AG04449 (cell line): ENCODE measurements at regions of chr2 and their contacts with region 1.

Region 1: DNA sequence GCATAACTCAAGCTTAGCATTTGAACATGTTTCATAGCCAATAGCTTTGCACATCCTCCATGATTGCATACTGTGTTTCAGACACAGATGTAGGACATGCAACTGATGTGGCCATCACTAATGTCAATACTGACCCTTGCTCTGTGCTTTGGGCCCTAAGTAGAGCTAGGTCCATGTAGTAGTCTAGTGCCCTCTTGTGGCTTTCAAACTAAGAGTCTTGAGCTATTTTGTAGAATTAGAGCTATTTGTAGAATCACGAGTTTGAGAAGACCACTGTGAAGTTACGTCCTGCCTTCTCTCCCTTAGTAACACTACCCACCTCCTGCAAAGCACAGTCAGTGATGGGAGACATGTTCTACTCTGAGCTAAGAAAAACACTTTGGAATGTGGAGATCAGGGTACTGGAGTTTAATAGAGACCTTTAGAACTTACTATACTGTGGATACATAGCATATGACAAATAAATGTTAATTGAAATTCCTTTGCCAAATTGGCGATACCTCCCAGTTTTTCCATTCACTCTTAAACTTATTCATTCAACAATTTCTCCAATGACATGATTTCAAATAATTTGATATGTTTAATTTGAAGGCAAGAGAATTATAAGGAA is 306.5 kb upstream of the TNP1 start:
- DNase-seq: no peak
- H3K4me3 ChIP-seq: no peak overlapping the region
- CTCF ChIP-seq: peak; percentile 40

Region 2: DNA sequence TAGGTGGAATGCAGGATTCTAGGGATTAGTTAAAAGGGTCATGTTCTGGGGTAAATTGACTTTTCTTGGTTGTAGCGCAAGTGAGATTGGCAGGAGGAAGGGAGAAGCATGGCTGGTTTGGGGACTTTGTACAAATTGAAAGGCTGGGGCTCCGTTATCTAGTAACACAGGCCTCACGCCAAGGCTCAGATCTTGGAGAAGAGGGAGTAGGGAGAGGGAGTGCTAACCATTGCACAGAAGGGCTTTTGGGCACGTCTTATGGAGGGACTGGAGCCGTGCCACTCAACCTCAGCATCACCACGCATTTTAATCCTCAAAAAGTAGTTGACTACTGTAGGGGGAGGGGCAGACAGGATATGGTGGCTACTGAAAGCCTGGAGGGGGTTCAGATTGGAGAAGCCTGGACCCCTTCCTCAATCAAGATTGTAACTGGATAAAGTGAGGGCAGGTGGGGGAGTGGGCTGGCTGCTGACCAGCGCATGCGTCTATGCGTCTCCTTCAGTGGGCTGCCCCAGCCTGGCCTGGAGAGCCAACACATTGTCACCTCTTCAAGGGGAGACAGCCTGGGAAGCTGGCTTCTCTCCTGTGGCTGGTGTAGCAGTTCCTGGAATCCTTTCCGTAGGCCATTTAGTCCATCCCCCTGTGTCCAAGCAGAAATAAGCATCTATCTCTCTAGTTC is 485.3 kb before region 1 on chr2:
- CTCF ChIA-PET with region 1: interaction called, 18 read pairs
- POLR2A ChIA-PET with region 1: no interaction called
- DNase-seq: no peak
- H3K4me3 ChIP-seq: no peak overlapping the region
- CTCF ChIP-seq: no peak

Region 3: DNA sequence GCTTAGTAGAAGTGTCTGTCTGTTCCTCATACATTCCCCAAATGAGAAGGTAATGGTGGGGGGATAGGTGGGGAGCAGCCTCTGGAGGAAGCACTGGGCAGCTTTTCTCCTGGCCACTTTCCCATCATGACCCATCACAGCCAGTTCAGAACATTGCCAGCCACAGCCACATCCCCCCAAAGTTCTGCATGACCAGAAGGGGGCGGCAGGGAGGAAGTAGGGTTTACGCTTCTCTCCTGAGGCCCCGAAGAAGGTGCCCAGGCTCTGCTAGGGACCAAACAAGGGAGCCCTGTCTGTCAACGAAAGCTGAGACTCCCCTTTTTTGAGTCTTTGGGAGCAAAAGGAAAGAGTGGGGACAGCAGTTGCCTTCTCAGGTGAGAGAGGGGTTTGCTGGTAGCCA is 478.7 kb before region 1 on chr2:
- CTCF ChIA-PET with region 1: interaction called, 122 read pairs
- POLR2A ChIA-PET with region 1: no interaction called
- DNase-seq: no peak
- H3K4me3 ChIP-seq: no peak overlapping the region
- CTCF ChIP-seq: peak; percentile 37

Region 4: DNA sequence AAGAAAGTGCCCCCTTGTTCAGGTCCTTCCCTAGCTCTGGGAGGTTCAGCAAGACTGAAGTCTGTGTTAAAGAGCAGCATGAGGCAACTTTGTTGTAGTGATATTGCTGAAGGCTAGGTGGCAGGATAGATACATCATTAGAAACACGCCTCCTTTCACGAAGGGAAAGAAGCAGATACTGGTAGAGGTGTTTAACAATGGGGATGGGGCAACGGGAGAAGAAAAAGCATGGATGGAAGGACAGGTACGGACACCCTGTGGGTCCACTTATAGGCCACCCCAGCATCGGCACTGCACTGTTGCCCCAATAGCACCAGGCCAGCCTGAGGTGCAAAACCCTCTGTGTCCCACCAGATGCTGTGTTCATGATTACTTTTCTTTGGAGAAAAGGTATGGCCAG is 467.5 kb before region 1 on chr2:
- CTCF ChIA-PET with region 1: interaction called, 122 read pairs
- POLR2A ChIA-PET with region 1: no interaction called
- DNase-seq: no peak
- H3K4me3 ChIP-seq: no peak overlapping the region
- CTCF ChIP-seq: peak; percentile 66

Region 5: GRCh38 chr2:217177720-217178119 is 11.4 kb after region 1 on chr2:
- CTCF ChIA-PET with region 1: interaction called, 14 read pairs
- POLR2A ChIA-PET with region 1: no interaction called
- DNase-seq: no peak
- H3K4me3 ChIP-seq: no peak overlapping the region
- CTCF ChIP-seq: no peak